ENCODE measurements at regions of chr15 and their contacts with region 1.

Region 1: DNA sequence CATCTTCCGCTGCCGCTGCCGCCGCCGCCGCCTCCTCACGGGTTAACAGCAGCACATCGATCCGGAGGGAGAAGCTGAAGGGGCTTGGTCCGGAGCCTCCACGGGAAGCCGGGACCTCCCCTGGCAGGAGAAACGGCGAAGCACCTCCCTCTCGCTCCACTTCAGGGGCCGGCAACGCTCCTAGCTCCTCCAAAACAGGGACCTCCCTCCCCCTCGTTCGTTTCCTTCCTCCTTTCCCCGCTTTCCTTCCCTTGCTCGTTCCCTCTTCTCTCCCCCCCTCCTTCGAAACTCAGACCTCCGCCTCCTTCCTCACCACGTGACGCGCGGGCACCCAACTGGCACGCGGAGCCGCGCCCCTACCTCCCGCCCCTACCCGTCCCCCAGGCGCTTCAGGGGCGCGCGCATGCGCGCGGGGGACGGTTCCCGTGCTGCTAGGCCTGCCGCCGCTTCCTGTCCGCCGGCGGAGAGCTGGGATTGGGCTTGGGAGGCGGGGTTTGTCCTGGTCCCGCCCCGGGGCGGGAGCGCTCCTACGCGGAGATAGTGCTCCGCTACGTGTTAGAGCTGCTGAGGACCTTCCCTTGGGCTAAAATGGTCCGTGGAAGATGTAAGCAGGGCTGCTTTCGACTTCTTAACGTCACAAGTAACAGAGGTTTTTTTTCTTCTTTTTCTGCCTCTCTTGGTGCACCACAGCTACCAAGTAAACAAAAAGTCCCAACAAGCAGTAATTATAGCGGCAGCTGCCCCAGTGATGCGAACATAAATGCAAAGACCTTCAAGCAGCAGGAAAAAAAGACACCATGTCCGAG is at the start of gene ADAM10:
- DNase-seq: peak; percentile 98
- H3K4me3 Mint-ChIP-seq: peak within 1 kb of the TSS; percentile 94
- H3K27ac Mint-ChIP-seq: peak within 1 kb of the TSS; percentile 94
- H3K4me1 Mint-ChIP-seq: peaks cover 27% of the 10 kb centered on the region
- H3K27me3 Mint-ChIP-seq: no peaks in the 10 kb centered on the region
- total RNA-seq, gene ADAM10: 70.7 to 76.3 TPM

Region 2: DNA sequence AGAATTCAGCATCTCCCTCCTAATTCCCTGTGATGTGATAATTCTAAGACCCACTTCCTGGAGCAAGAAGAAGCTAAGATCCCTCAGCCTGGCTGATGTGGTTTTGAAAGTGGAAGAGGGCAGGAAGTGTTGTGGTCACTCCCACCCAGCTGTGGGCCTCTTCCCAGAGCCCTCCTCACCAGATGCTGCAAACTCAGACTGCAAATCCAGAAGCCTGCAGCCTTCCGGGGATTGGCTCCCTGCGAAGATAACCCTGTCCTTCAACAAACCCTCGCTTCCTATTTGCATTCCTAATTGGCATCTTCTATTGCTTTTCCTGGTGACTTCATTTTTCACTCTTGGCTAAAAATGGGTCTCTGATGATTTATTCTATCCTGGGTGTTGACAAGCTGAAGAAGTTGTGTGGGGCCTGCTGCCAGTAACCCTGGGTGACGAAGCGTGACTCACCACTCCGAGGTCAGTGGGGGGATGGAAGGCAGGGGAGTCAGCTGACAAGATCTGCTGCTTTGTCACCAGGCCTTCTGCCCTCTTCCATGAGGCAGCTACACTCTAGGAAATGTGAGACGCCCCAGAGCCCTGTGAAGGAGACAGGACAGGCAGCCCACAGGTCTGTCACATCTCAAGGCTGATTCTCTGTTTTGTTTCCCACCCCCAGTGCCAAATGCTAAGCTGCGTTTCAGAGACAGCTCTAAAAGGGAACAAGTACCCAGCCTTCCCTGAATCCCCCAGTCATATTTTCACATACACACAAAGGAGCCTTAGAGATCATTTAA is 417.6 kb before region 1 on chr15:
- CTCF ChIA-PET with region 1: no interaction called
- intact Hi-C with region 1: loop called (anchors 2 kb)
- DNase-seq: peak; percentile 97
- H3K4me3 Mint-ChIP-seq: peak overlapping the region; percentile 39
- H3K27ac Mint-ChIP-seq: peak overlapping the region; percentile 95
- H3K4me1 Mint-ChIP-seq: peaks cover 41% of the 10 kb centered on the region
- H3K27me3 Mint-ChIP-seq: no peaks in the 10 kb centered on the region

Region 3: DNA sequence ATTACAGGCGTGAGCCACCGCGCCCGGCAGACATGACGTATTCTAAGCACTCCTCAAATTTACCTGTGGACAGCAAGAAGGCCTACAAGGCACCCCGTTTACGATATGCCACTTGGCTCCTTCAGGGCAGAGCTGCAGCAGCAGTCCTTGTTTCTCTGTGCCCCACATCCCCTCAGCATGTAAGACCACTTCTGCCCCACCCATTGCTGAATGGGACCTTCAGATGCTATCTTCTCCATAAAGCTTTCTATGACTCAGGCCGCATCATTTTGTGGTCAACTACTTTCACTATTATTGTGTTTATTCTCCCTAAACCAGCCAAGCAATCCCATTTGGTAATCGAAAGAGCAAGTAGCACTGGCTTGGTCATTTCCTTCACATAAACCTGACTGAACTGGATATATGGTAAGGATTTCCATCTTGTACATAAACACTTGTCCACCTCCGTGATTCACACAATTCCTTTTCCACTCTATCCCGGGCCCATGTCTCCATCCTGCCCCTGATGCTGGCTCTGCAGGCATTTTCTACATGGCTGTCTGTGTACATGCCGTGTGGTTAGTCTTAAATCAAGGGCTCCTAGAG is 292.3 kb before region 1 on chr15:
- CTCF ChIA-PET with region 1: no interaction called
- intact Hi-C with region 1: loop called (anchors 10 kb)
- DNase-seq: peak; percentile 34
- H3K4me3 Mint-ChIP-seq: no peak overlapping the region
- H3K27ac Mint-ChIP-seq: no peak overlapping the region
- H3K4me1 Mint-ChIP-seq: peaks cover 58% of the 10 kb centered on the region
- H3K27me3 Mint-ChIP-seq: no peaks in the 10 kb centered on the region

Region 4: DNA sequence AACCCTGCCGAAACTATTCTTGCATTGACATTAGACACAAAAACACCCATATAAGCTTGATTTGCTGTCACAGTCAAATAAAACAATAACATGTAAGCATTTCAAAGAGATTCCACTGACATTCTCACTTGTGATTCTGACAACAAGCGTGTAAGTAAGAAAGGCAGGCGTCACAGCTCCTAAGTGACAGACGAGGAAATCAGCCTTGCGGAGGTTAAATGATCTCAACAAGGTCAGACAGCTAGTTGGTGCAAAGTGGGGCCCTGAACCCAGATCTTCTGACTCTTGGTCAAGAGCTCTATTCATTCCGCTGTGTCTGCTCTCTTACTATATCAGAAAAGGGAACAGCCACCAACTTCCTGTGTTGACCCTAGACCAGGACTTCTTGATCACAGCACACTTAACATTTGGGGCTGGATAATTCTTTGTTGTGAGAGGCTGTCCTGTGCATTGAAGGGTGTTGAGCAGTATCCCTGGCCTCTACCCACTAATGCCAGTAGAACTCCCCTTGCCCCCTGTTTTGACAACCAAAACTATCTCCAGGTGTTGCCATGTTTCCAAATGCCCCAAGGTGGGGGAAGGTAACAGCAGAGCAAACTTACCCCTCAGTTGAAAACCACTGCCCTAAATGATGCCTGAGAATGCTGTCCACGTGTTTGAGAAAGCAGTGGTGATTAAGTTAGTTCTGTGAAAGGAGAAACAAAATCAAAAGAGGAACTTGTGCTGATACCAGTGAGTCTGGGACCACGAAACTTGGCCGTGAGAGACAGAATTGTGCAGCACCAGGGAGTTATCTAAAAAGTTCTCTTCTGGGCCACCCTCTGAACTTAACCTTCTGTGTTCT is 231.8 kb before region 1 on chr15:
- CTCF ChIA-PET with region 1: interaction called, 3 read pairs
- intact Hi-C with region 1: loop called (anchors 1 kb)
- DNase-seq: peak; percentile 38
- H3K4me3 Mint-ChIP-seq: no peak overlapping the region
- H3K27ac Mint-ChIP-seq: peak overlapping the region; percentile 43
- H3K4me1 Mint-ChIP-seq: peaks cover 62% of the 10 kb centered on the region
- H3K27me3 Mint-ChIP-seq: no peaks in the 10 kb centered on the region

Region 5: GRCh38 chr15:58704155-58704865 is 45.4 kb before region 1 on chr15:
- CTCF ChIA-PET with region 1: no interaction called
- intact Hi-C with region 1: loop called (anchors 5 kb)
- DNase-seq: no peak
- H3K4me3 Mint-ChIP-seq: no peak overlapping the region
- H3K27ac Mint-ChIP-seq: no peak overlapping the region
- H3K4me1 Mint-ChIP-seq: peaks cover 58% of the 10 kb centered on the region
- H3K27me3 Mint-ChIP-seq: no peaks in the 10 kb centered on the region

Region 6: GRCh38 chr15:58770857-58771620 is 21.3 kb after region 1 on chr15 and contains the start of gene MINDY2:
- CTCF ChIA-PET with region 1: interaction called, 11 read pairs
- intact Hi-C with region 1: loop called (anchors 1 kb)
- DNase-seq: peak; percentile 95
- H3K4me3 Mint-ChIP-seq: peak within 1 kb of the TSS; percentile 92
- H3K27ac Mint-ChIP-seq: peak within 1 kb of the TSS; percentile 65
- H3K4me1 Mint-ChIP-seq: no peaks in the 10 kb centered on the region
- H3K27me3 Mint-ChIP-seq: no peaks in the 10 kb centered on the region
- total RNA-seq, gene MINDY2: 4.6 to 6.6 TPM

Region 7: GRCh38 chr15:58864602-58865424 is 115.1 kb after region 1 on chr15:
- CTCF ChIA-PET with region 1: no interaction called
- intact Hi-C with region 1: no loop called
- DNase-seq: peak; percentile 10
- H3K4me3 Mint-ChIP-seq: peak overlapping the region; percentile 41
- H3K27ac Mint-ChIP-seq: no peak overlapping the region
- H3K4me1 Mint-ChIP-seq: peaks cover 22% of the 10 kb centered on the region
- H3K27me3 Mint-ChIP-seq: peaks cover 7% of the 10 kb centered on the region